Endothelial cell of umbilical vein (primary cell): ENCODE measurements at regions of chr22 and their contacts with region 1.

Region 1: DNA sequence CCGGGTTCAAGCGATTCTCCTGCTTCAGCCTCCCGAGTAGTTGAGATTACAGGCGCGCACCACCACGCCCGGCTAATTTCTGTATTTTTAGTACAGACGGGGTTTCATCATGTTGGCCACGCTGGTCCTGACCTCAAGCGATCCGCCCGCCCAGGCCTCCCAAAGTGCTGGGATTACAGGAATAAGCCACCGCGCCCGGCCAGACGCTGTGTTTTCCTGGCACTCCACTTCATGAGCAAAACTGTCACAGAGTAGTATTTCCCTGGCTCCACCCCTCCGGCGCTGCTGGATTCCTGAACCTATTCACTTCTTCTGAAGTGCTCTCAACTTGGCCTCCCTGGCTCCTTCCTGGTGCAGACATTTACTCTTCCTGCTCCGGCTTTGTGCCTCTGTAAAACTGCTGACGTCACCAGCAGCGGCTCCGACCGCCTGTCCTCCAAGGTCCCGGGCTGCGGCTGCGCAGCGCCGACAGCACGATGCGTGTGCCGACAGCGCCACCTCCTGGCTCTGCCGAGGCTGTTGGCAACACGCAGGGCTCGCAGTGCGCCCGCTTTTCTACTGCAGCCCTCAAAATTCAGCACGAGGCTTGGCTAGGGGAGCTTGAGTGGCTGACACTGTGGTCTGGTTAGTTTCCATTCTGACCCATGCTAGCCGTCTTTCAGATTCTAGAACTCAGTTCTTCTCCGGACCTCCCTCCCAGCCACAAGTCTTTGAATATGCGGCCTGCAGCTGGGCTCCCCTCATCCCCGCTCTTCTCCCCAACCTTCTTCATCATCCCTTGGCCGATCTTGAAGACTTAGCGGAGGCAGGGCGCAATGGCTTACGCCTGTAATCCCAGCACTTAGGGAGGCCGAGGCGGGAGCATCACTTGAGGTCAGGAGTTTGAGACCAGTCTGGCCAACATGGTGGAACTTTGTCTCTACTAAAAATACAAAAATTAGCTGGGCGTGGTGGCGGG is 36.6 kb downstream of the APOL3 start:
- DNase-seq: peak; percentile 96
- H3K4me3 ChIP-seq: no peak overlapping the region
- H3K27ac ChIP-seq: peak overlapping the region; percentile 18
- H3K4me1 ChIP-seq: no peaks in the 10 kb centered on the region
- H3K27me3 ChIP-seq: no peaks in the 10 kb centered on the region
- CTCF ChIP-seq: peak; percentile 98 to 99
- POLR2A ChIP-seq: no peak

Region 2: DNA sequence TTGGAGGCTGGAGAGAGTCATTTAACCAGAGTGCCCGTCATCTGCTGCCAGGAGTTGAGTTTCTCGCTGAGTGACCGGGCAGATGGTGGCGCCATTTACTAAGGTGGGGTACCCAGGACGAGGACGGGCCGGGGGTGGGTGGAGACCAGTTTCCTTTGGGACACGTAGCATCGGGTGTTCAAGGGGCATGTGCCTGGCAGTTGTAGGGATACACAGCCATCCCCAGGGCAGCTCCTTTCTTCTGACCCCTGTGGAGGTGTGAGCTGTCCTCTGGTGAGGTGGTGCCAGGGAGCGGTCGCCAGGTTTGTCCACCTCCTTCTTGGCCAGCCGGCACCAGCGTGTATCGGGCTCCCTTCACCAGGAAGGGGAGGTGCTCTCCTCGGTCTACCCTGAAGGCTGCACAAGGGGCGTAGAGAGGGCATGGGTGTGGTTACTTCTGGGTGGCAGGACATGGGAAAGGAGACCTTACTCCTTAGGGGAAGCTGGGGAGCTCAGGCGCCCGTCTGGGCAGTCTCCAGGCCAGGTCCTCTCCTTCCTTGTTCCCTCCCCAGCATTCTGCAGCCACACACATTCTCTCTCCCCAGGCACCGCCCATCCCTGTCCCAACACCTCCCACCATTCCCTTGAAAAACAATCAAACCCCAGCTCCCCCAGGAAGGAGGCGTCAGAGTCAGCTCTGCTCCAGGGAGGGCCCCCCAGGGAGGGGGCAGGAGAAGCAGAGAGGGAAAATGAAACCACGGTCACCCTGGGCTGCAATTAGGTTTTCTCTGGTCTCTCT is 496.5 kb before region 1 on chr22:
- CTCF ChIA-PET with region 1: interaction called, 6 read pairs
- POLR2A ChIA-PET with region 1: no interaction called
- dilution Hi-C with region 1: no loop called
- intact Hi-C with region 1: loop called (anchors 1 kb)
- DNase-seq: peak; percentile 76
- H3K4me3 ChIP-seq: peak overlapping the region; percentile 27 to 58 (median 51)
- H3K27ac ChIP-seq: peak overlapping the region; percentile 30
- H3K4me1 ChIP-seq: peaks cover 8% of the 10 kb centered on the region
- H3K27me3 ChIP-seq: no peaks in the 10 kb centered on the region
- CTCF ChIP-seq: peak; percentile 48 to 54
- POLR2A ChIP-seq: peak; percentile 21